Panc1 (cell line): ENCODE measurements at regions of chr7 and their contacts with region 1.

Region 1: DNA sequence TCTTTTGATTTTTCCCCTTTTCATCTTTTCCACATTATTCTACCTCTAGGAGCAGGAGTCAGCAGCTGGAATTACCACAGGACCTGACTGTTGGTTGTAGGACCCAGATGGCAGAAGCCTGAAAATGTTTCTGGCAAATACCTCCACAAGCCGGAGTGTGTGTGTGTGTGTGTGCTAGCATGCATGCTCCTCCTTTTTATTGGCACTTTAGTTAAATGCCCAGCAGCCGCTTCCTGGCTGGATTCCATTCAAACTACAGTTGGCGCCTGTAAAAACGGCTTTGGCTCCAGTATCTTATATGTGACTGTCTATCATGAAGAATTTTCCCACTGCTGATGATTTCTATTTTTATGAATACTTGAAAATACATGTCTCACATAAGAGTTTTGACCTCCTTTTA is 319.7 kb upstream of the SP4 start:
- DNase-seq: no peak
- ATAC-seq: no peak
- H3K4me3 ChIP-seq: no peak overlapping the region
- H3K27ac ChIP-seq: no peak overlapping the region
- H3K4me1 ChIP-seq: no peaks in the 10 kb centered on the region
- H3K27me3 ChIP-seq: no peaks in the 10 kb centered on the region
- CTCF ChIP-seq: no peak

Region 2: DNA sequence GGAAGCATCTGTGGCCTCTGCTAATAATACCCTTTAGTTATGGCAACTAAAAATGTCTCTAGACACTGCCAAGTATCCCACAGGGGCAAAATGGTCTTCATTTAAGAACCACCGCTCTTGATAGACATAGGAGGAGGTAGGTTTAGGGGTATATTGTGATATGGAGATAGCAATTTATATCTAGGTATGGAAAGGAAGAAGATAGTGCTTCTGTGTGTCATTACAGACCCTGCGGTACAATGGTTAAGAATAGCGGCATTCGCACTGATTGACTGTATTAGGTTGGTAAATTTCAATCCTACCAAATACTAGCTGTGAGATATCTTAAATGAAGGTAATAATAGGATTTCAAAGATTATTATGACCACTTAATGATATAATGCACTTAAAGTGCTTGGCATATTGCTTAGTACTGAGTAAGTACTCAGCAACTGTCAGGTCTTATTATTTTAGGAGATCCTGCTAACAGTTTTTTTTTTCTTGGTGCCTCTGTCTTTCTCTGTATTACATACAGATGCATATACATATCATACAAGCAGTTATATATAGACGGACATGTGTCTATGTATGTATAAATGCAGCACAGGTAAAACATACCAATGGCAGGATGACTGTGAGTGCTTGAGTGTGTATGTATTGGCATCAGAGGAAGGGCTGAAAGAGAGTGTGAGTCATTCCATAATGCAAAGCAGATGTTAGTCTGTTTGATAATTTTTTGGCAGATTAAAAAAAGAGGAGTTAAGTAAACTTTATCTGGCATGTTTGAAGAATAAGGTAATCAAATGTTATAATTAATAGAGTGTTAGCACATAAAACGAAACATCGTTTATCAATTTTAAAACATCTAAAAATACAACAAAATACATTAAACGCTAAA is 827.5 kb before region 1 on chr7:
- CTCF ChIA-PET with region 1: no interaction called
- POLR2A ChIA-PET with region 1: no interaction called
- in situ Hi-C with region 1: no loop called
- intact Hi-C with region 1: no loop called
- DNase-seq: no peak
- ATAC-seq: no peak
- H3K4me3 ChIP-seq: no peak overlapping the region
- H3K27ac ChIP-seq: no peak overlapping the region
- H3K4me1 ChIP-seq: no peaks in the 10 kb centered on the region
- H3K27me3 ChIP-seq: no peaks in the 10 kb centered on the region
- CTCF ChIP-seq: no peak

Region 3: DNA sequence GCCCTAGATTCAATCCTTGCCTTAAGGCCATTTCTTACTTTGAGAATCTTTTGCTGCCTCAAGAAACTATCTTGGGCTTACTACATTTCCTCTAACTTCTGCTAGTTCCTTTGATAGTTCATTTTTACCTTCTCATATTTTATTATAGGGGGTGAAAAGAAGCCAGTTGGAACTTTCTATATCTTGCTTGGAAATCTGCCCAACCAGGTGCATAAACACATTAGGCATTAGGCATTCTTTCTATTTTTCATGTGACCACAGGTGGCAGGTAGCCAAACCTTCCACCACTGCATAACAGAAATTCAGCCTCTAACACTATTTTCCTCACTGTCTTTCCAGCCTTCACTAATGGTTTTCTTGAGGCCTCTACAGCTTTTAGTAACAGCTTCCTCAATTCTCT is 21.5 kb before region 1 on chr7:
- CTCF ChIA-PET with region 1: no interaction called
- POLR2A ChIA-PET with region 1: no interaction called
- in situ Hi-C with region 1: no loop called
- intact Hi-C with region 1: loop called (anchors 1 kb)
- DNase-seq: no peak
- ATAC-seq: no peak
- H3K4me3 ChIP-seq: no peak overlapping the region
- H3K27ac ChIP-seq: no peak overlapping the region
- H3K4me1 ChIP-seq: no peaks in the 10 kb centered on the region
- H3K27me3 ChIP-seq: no peaks in the 10 kb centered on the region
- CTCF ChIP-seq: no peak